ENCODE measurements at regions of chr11 and their contacts with region 1.

Region 1: DNA sequence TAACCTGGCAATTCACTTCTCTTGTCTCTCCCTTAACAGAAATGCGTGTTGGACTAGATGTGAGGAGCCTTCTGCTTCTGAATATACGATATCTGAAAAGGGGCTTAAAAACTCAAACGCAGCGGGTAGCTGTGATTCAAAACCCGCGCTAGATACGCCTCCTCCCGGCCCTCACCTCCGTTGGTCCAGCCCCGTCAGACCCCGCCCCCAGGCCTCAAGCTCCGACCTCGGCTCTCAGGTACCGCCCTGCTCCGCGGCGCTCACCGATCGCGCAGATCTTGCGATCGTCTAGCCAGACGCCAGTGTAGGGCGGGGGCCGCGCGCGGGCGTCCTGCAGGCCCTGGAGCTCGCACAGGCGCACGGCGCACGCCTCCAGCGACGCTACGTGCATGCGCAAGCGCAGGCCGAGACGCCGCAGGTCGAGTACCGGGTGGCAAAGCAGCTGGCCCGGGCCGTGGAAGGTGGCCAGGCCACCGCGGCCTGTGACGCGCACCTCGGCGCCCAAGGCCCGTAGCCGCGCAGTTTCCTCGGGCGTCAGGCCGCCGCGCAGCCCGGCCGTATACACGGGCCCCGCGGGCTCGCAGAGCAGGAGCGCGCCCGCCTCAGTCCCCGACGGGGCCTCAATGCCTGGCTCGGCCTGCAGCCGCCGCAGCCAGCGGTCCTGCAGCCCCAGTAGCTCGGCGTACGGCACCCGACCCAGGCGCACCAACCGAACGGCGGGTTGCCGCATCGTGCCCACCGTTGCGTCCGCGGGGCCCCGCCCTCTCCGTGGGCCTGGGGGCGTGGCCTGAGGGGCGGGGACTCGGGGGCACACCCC is at the start of gene LIPT2:
- DNase-seq: peak; percentile 69
- H3K4me3 ChIP-seq: peak within 1 kb of the TSS; percentile 59 to 80 (median 78)
- H3K27ac ChIP-seq: peak within 1 kb of the TSS; percentile 89
- H3K4me1 ChIP-seq: peaks cover 9% of the 10 kb centered on the region
- H3K27me3 ChIP-seq: no peaks in the 10 kb centered on the region
- CTCF ChIP-seq: no peak
- polyA plus RNA-seq, gene LIPT2: 1.2 to 2.6 TPM (median 2.3 TPM) in 3 replicates

Region 2: DNA sequence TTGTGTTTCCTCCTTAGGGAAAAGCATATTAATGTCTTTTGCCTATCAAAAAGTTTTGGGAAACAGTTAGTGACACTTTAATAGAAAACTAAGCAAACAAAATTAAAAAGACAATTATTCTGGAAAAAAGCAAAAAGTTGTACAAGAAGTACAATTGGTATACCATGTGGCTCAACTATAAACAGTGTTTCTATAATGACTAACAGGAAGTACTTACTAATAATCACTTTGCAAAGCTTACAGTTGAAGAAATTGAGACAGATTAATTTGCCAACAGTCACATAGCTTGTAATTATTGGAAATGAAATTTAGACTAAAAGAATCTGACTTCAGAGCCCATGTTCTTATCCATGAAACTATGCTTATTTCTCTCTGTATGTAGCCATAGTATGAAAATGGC is 297.4 kb before region 1 on chr11:
- dilution Hi-C with region 1: no loop called
- DNase-seq: no peak
- H3K4me3 ChIP-seq: no peak overlapping the region
- H3K27ac ChIP-seq: no peak overlapping the region
- H3K4me1 ChIP-seq: peaks cover 9% of the 10 kb centered on the region
- H3K27me3 ChIP-seq: no peaks in the 10 kb centered on the region
- CTCF ChIP-seq: no peak

Region 3: GRCh38 chr11:74269161-74269811 is 223.9 kb before region 1 on chr11:
- dilution Hi-C with region 1: no loop called
- DNase-seq: no peak
- H3K4me3 ChIP-seq: no peak overlapping the region
- H3K27ac ChIP-seq: no peak overlapping the region
- H3K4me1 ChIP-seq: peaks cover 10% of the 10 kb centered on the region
- H3K27me3 ChIP-seq: no peaks in the 10 kb centered on the region
- CTCF ChIP-seq: no peak

Region 4: DNA sequence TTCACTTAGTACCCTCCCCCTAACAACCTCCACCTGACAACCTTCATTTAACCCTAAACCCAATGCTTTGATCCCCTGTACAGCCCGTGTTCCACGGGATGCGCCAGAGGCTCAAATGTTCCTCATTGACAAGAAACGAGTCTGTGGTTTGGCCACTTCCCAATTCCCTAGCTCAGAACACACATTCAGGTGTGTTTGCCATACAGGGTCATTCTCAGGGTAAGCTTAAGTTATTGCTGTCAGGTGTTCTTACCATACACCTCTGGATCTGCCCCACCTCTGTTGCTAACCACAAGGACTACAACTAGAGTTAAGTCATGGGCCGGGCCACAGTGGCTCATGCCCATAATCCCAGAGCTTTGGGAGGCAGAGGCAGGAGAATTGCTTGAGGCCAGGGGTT is 53.5 kb after region 1 on chr11:
- dilution Hi-C with region 1: loop called (anchors 5 kb)
- DNase-seq: peak; percentile 61
- H3K4me3 ChIP-seq: no peak overlapping the region
- H3K27ac ChIP-seq: no peak overlapping the region
- H3K4me1 ChIP-seq: no peaks in the 10 kb centered on the region
- H3K27me3 ChIP-seq: peaks cover 19% of the 10 kb centered on the region
- CTCF ChIP-seq: no peak